ENCODE measurements at regions of chr17 and their contacts with region 1.

Region 1: GRCh38 chr17:68398691-68399637 is 58.3 kb downstream of the WIPI1 start:
- DNase-seq: peak; percentile 64
- ATAC-seq: peak; percentile 57
- H3K4me3 Mint-ChIP-seq: peak overlapping the region; percentile 22
- H3K27ac Mint-ChIP-seq: peak overlapping the region; percentile 93
- H3K4me1 Mint-ChIP-seq: peaks cover 35% of the 10 kb centered on the region
- H3K27me3 Mint-ChIP-seq: no peaks in the 10 kb centered on the region
- CTCF ChIP-seq: peak; percentile 77

Region 2: DNA sequence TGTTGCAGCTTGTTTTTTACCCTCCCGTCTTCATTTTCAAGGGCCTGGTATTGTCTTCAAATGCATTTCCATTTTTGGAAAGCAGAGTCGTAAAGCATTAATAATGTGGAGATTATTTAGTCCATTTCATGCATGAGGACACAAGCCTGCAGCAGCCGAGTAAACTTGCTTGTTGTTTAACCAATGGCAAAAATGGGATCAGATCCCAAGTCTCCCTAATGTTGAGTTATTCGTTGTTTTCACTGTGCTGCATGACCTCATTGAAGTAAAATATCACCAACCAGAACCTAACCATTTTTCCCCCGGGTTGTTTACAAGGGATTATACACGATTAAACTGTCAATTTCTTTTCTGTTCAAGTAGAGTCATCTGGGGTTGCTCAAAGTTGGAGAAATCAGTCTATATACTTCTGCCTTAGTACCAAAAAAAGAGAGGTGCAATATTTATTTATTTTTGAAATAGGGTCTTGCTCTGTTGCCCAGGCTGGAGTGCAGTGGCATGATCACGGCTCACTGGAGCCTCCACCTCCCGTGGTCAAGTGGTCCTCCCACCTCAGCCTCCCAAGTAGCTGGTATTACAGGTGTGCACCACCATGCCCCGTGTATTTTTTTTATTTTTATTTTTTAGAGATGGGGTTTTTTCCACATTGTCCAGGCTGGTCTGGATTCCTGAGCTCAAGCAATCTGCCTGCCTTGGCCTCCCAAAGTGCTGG is 138.8 kb before region 1 on chr17:
- CTCF ChIA-PET with region 1: interaction called, 18 read pairs
- POLR2A ChIA-PET with region 1: no interaction called
- intact Hi-C with region 1: loop called (anchors 5 kb)
- DNase-seq: no peak
- ATAC-seq: no peak
- H3K4me3 Mint-ChIP-seq: peak overlapping the region; percentile 69
- H3K27ac Mint-ChIP-seq: peak overlapping the region; percentile 93
- H3K4me1 Mint-ChIP-seq: peaks cover 63% of the 10 kb centered on the region
- H3K27me3 Mint-ChIP-seq: no peaks in the 10 kb centered on the region
- CTCF ChIP-seq: no peak

Region 3: DNA sequence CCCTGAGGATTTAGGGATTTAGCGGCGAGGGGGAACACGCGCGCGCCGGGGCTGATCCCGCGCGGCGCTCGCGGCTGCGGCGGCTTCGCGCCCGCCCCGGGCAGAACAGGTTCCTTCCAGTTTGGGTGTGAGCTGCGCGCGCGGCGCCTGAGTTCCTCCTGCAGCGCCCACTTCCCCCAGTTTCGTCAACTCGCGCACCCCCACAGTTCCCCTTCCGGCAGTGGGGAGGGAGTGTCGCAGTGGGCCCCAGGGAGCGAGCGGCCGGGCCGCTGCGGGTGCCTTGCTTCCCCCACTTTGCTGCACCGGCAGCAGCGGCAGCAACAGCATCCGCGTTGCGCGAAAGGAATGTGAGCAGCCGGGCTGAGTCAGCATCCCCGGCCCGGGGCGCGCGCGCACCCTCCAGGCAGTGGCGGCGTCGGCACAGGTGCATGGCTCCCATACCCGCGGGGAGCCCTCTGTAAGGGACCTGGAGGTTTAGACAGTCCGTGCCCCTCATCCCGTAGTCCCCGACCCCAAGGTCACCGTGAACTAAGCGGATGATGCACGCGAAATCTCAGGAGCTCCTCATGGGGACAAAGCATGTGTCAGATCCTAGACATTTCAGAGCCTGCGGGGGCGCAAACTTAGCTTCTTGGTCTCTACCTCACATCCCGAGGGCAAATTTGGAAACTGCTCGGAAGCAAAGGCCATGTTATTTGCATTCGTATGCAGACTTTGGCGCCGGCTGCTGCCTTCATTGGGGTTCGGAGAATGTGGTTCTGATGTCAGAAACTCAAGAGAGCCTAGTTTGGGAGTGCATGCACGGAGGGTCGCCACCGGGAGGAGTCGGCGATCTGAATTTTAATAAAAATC is 106.9 kb before region 1 on chr17:
- CTCF ChIA-PET with region 1: interaction called, 14 read pairs
- POLR2A ChIA-PET with region 1: interaction called, 8 read pairs
- intact Hi-C with region 1: loop called (anchors 5 kb)
- DNase-seq: peak; percentile 93
- ATAC-seq: peak; percentile 69
- H3K4me3 Mint-ChIP-seq: peak overlapping the region; percentile 94
- H3K27ac Mint-ChIP-seq: peak overlapping the region; percentile 93
- H3K4me1 Mint-ChIP-seq: peaks cover 65% of the 10 kb centered on the region
- H3K27me3 Mint-ChIP-seq: no peaks in the 10 kb centered on the region
- CTCF ChIP-seq: no peak

Region 4: GRCh38 chr17:68346448-68346847 is 52.5 kb before region 1 on chr17:
- CTCF ChIA-PET with region 1: interaction called, 11 read pairs
- POLR2A ChIA-PET with region 1: interaction called, 3 read pairs
- intact Hi-C with region 1: loop called (anchors 10 kb)
- DNase-seq: peak; percentile 90
- ATAC-seq: peak; percentile 86
- H3K4me3 Mint-ChIP-seq: peak overlapping the region; percentile 71
- H3K27ac Mint-ChIP-seq: peak overlapping the region; percentile 97
- H3K4me1 Mint-ChIP-seq: peaks cover 65% of the 10 kb centered on the region
- H3K27me3 Mint-ChIP-seq: no peaks in the 10 kb centered on the region
- CTCF ChIP-seq: no peak

Region 5: GRCh38 chr17:68356520-68356919 is 42.4 kb before region 1 on chr17:
- CTCF ChIA-PET with region 1: interaction called, 21 read pairs
- POLR2A ChIA-PET with region 1: no interaction called
- intact Hi-C with region 1: loop called (anchors 10 kb)
- DNase-seq: peak; percentile 81
- ATAC-seq: peak; percentile 92
- H3K4me3 Mint-ChIP-seq: peak overlapping the region; percentile 51
- H3K27ac Mint-ChIP-seq: peak overlapping the region; percentile 76
- H3K4me1 Mint-ChIP-seq: peaks cover 45% of the 10 kb centered on the region
- H3K27me3 Mint-ChIP-seq: no peaks in the 10 kb centered on the region
- CTCF ChIP-seq: no peak

Region 6: GRCh38 chr17:68383443-68384321 is 15.3 kb before region 1 on chr17:
- CTCF ChIA-PET with region 1: interaction called, 10 read pairs
- POLR2A ChIA-PET with region 1: interaction called, 5 read pairs
- intact Hi-C with region 1: no loop called
- DNase-seq: peak; percentile 36
- ATAC-seq: peak; percentile 81
- H3K4me3 Mint-ChIP-seq: no peak overlapping the region
- H3K27ac Mint-ChIP-seq: no peak overlapping the region
- H3K4me1 Mint-ChIP-seq: peaks cover 24% of the 10 kb centered on the region
- H3K27me3 Mint-ChIP-seq: no peaks in the 10 kb centered on the region
- CTCF ChIP-seq: no peak

Region 7: GRCh38 chr17:68420065-68420464 is 21.1 kb after region 1 on chr17:
- CTCF ChIA-PET with region 1: interaction called, 12 read pairs
- POLR2A ChIA-PET with region 1: no interaction called
- intact Hi-C with region 1: no loop called
- DNase-seq: no peak
- ATAC-seq: no peak
- H3K4me3 Mint-ChIP-seq: no peak overlapping the region
- H3K27ac Mint-ChIP-seq: no peak overlapping the region
- H3K4me1 Mint-ChIP-seq: peaks cover 12% of the 10 kb centered on the region
- H3K27me3 Mint-ChIP-seq: no peaks in the 10 kb centered on the region
- CTCF ChIP-seq: no peak

Measured in activated CD8-positive, alpha-beta T cell treated with anti-CD3 and anti-CD28 coated beads for 36 hours (primary cell).